Ovary (tissue), 10 donors: ENCODE measurements at regions of chr1 and their contacts with region 1.

Region 1: GRCh38 chr1:56302878-56303277 is 276.5 kb downstream of the PLPP3 start:
- DNase-seq: no peak
- H3K4me3 ChIP-seq: no peak overlapping the region
- H3K27ac ChIP-seq: no peak overlapping the region
- H3K4me1 ChIP-seq: peaks cover 10% of the 10 kb centered on the region
- H3K27me3 ChIP-seq: no peaks in the 10 kb centered on the region
- CTCF ChIP-seq: no peak
- EP300 ChIP-seq: no peak
- POLR2A ChIP-seq: no peak

Region 2: GRCh38 chr1:55443175-55443915 is 859.5 kb before region 1 on chr1:
- intact Hi-C with region 1: loop called in 1 of 4 experiments (anchors 5 kb)
- DNase-seq: peak; percentile 70 to 85 (median 76)
- H3K4me3 ChIP-seq: no peak overlapping the region
- H3K27ac ChIP-seq: peak overlapping the region in 1 of 2 donors; percentile 26
- H3K4me1 ChIP-seq: no peaks in the 10 kb centered on the region
- H3K27me3 ChIP-seq: no peaks in the 10 kb centered on the region
- CTCF ChIP-seq: no peak
- EP300 ChIP-seq: peak; percentile 94
- POLR2A ChIP-seq: no peak

Region 3: GRCh38 chr1:56330391-56331026 is 27.6 kb after region 1 on chr1:
- intact Hi-C with region 1: loop called in 1 of 4 experiments (anchors 1 kb)
- DNase-seq: no peak
- H3K4me3 ChIP-seq: no peak overlapping the region
- H3K27ac ChIP-seq: no peak overlapping the region
- H3K4me1 ChIP-seq: peaks cover 2% of the 10 kb centered on the region
- H3K27me3 ChIP-seq: no peaks in the 10 kb centered on the region
- CTCF ChIP-seq: no peak
- EP300 ChIP-seq: no peak
- POLR2A ChIP-seq: no peak